Naive thymus-derived CD4-positive, alpha-beta T cell (primary cell): ENCODE measurements at regions of chr14 and their contacts with region 1.

Region 1: GRCh38 chr14:20873370-20874177 is 17.6 kb upstream of the RNASE3 start:
- DNase-seq: peak; percentile 42 to 76 (median 69)
- ATAC-seq: peak; percentile 87
- H3K4me3 ChIP-seq: no peak overlapping the region
- H3K4me3 Mint-ChIP-seq: peak overlapping the region in 8 of 10 donors; percentile 18 to 62 (median 45)
- H3K27ac ChIP-seq: no peak overlapping the region
- H3K27ac Mint-ChIP-seq: peak overlapping the region in 2 of 9 donors; percentile 57 to 68
- H3K4me1 ChIP-seq: peaks cover 0 to 6% of the 10 kb centered on the region in 2 donors
- H3K4me1 Mint-ChIP-seq: peaks cover 10 to 14% (median 13%) of the 10 kb centered on the region in 7 donors
- H3K27me3 ChIP-seq: peaks cover 0 to 4% of the 10 kb centered on the region in 2 donors
- H3K27me3 Mint-ChIP-seq: peaks cover 0 to 34% (median 10%) of the 10 kb centered on the region in 5 donors

Region 2: GRCh38 chr14:20697273-20698017 is 176.1 kb before region 1 on chr14:
- CTCF ChIA-PET with region 1: interaction called, 18 read pairs
- POLR2A ChIA-PET with region 1: interaction called, 3 read pairs
- intact Hi-C with region 1: loop called (anchors 1 kb)
- DNase-seq: peak; percentile 36 to 67 (median 57)
- ATAC-seq: peak; percentile 89
- H3K4me3 ChIP-seq: no peak overlapping the region
- H3K4me3 Mint-ChIP-seq: no peak overlapping the region
- H3K27ac ChIP-seq: no peak overlapping the region
- H3K27ac Mint-ChIP-seq: no peak overlapping the region
- H3K4me1 ChIP-seq: no peaks in the 10 kb centered on the region
- H3K4me1 Mint-ChIP-seq: peaks cover 0 to 1% (median 0%) of the 10 kb centered on the region in 7 donors
- H3K27me3 ChIP-seq: no peaks in the 10 kb centered on the region
- H3K27me3 Mint-ChIP-seq: peaks cover 0 to 15% (median 0%) of the 10 kb centered on the region in 5 donors

Region 3: DNA sequence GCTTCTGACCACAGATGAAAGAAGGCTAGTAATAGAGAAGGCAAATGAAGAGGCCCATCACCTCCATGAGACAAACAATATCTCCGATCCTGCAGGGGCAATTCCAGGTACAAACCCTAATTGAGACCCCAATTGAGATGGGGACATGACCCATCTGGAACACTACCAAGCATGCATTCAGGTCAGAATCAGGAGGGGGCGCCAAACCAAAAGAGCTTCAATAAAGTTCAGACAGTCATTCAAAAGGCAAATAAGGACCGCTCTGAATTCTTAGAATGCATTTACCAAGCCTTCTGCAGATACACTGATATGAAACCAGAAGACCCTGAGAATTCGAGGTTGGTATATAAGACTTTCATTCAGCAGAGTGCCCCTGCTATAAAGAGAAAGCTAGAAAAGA is 115.6 kb before region 1 on chr14:
- CTCF ChIA-PET with region 1: interaction called, 3 read pairs
- POLR2A ChIA-PET with region 1: no interaction called
- intact Hi-C with region 1: loop called (anchors 1 to 5 kb)
- DNase-seq: peak in 5 of 9 donors; percentile 11 to 37 (median 31)
- ATAC-seq: no peak
- H3K4me3 ChIP-seq: no peak overlapping the region
- H3K4me3 Mint-ChIP-seq: no peak overlapping the region
- H3K27ac ChIP-seq: no peak overlapping the region
- H3K27ac Mint-ChIP-seq: peak overlapping the region in 1 of 9 donors; percentile 3
- H3K4me1 ChIP-seq: no peaks in the 10 kb centered on the region
- H3K4me1 Mint-ChIP-seq: no peaks in the 10 kb centered on the region
- H3K27me3 ChIP-seq: no peaks in the 10 kb centered on the region
- H3K27me3 Mint-ChIP-seq: peaks cover 0 to 6% (median 0%) of the 10 kb centered on the region in 5 donors

Region 4: GRCh38 chr14:20956376-20956976 is 82.9 kb after region 1 on chr14:
- CTCF ChIA-PET with region 1: no interaction called
- POLR2A ChIA-PET with region 1: no interaction called
- intact Hi-C with region 1: loop called in 1 of 2 experiments (anchors 1 kb)
- DNase-seq: peak in 6 of 9 donors; percentile 3 to 31 (median 25)
- ATAC-seq: peak; percentile 47
- H3K4me3 ChIP-seq: no peak overlapping the region
- H3K4me3 Mint-ChIP-seq: peak overlapping the region in 9 of 10 donors; percentile 26 to 76 (median 42)
- H3K27ac ChIP-seq: no peak overlapping the region
- H3K27ac Mint-ChIP-seq: peak overlapping the region in 7 of 9 donors; percentile 0 to 81 (median 9)
- H3K4me1 ChIP-seq: peaks cover 0 to under 1% of the 10 kb centered on the region in 2 donors
- H3K4me1 Mint-ChIP-seq: peaks cover 19 to 28% (median 22%) of the 10 kb centered on the region in 7 donors
- H3K27me3 ChIP-seq: no peaks in the 10 kb centered on the region
- H3K27me3 Mint-ChIP-seq: peaks cover 0 to 26% (median 18%) of the 10 kb centered on the region in 5 donors

Region 5: DNA sequence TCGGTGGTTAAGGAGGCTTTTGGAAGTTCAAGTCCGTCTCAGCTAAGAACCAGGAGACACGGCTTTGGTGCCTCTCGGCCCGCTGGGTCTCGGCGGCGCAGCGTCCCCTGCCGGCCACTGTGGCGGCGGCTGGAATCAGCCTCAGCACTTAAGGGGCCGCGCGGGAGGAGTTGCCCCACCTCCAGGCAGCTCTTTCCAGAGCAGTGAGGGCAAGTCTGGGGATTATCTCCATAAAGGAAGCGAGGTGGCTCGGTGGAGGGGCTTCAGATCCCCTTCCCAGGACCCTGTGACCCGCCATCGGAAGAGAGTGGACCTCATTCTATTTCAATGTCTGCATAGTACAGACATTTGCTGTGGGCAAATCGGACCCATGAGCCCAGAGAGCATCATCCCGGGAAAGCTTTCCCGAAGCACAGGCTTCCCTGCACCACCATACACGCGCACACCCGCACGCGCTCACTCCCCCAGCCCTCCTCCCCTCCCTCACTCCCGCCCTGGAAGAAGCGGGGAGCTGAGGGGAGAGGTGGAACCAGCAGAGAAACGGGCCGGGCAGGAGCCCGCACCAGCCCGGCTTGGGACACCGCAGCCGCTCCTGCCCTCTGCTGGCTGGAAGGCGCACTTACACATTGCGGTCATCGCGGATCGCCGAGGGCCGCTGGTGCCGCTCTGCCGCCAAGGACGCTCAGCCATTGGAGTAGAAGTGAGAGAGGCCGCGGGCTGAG is 97.6 kb after region 1 on chr14:
- CTCF ChIA-PET with region 1: no interaction called
- POLR2A ChIA-PET with region 1: no interaction called
- intact Hi-C with region 1: no loop called
- DNase-seq: peak; percentile 59 to 84 (median 74)
- ATAC-seq: peak; percentile 95
- H3K4me3 ChIP-seq: peak overlapping the region; percentile 92
- H3K4me3 Mint-ChIP-seq: peak overlapping the region; percentile 88 to 95 (median 92)
- H3K27ac ChIP-seq: peak overlapping the region; percentile 25
- H3K27ac Mint-ChIP-seq: peak overlapping the region in 5 of 9 donors; percentile 15 to 85 (median 60)
- H3K4me1 ChIP-seq: peaks cover 0 to 5% of the 10 kb centered on the region in 2 donors
- H3K4me1 Mint-ChIP-seq: peaks cover 5 to 17% (median 13%) of the 10 kb centered on the region in 7 donors
- H3K27me3 ChIP-seq: peaks cover 0 to 3% of the 10 kb centered on the region in 2 donors
- H3K27me3 Mint-ChIP-seq: peaks cover 20 to 44% (median 25%) of the 10 kb centered on the region in 5 donors

Region 6: DNA sequence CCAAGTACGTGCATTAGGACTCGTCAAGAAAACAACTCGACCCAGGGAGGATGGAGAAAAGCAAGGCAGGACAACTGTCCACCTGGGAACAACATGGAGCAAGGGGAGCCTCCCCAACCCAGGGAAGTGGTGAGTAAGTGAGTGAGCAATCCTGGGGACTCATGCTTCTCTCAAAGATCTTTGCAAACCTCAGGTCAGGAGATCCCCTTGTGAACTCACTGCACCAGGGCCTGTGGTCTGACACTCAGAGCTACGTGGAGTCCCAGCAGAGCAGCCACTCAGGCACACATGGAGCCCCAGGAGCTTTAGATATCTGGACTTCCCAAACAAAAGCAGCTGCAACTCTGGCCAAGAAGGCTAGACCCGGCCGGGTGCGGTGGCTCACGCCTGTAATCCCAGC is 294.5 kb after region 1 on chr14:
- CTCF ChIA-PET with region 1: no interaction called
- POLR2A ChIA-PET with region 1: no interaction called
- intact Hi-C with region 1: no loop called
- DNase-seq: no peak
- ATAC-seq: no peak
- H3K4me3 ChIP-seq: no peak overlapping the region
- H3K4me3 Mint-ChIP-seq: no peak overlapping the region
- H3K27ac ChIP-seq: no peak overlapping the region
- H3K27ac Mint-ChIP-seq: no peak overlapping the region
- H3K4me1 ChIP-seq: no peaks in the 10 kb centered on the region
- H3K4me1 Mint-ChIP-seq: peaks cover 0 to 3% (median 0%) of the 10 kb centered on the region in 7 donors
- H3K27me3 ChIP-seq: peaks cover 0 to 4% of the 10 kb centered on the region in 2 donors
- H3K27me3 Mint-ChIP-seq: peaks cover 3 to 37% (median 24%) of the 10 kb centered on the region in 5 donors